AG04450 (cell line): ENCODE measurements at regions of chr1 and their contacts with region 1.

Region 1: GRCh38 chr1:221741711-221742554 is at the start of gene DUSP10:
- DNase-seq: peak; percentile 100
- H3K4me3 ChIP-seq: peak within 1 kb of the TSS; percentile 95
- H3K27ac ChIP-seq: peak within 1 kb of the TSS; percentile 97
- H3K27me3 ChIP-seq: no peaks in the 10 kb centered on the region
- CTCF ChIP-seq: no peak
- polyA plus RNA-seq, gene DUSP10: 34.2 and 35.9 TPM in 2 replicates

Region 2: DNA sequence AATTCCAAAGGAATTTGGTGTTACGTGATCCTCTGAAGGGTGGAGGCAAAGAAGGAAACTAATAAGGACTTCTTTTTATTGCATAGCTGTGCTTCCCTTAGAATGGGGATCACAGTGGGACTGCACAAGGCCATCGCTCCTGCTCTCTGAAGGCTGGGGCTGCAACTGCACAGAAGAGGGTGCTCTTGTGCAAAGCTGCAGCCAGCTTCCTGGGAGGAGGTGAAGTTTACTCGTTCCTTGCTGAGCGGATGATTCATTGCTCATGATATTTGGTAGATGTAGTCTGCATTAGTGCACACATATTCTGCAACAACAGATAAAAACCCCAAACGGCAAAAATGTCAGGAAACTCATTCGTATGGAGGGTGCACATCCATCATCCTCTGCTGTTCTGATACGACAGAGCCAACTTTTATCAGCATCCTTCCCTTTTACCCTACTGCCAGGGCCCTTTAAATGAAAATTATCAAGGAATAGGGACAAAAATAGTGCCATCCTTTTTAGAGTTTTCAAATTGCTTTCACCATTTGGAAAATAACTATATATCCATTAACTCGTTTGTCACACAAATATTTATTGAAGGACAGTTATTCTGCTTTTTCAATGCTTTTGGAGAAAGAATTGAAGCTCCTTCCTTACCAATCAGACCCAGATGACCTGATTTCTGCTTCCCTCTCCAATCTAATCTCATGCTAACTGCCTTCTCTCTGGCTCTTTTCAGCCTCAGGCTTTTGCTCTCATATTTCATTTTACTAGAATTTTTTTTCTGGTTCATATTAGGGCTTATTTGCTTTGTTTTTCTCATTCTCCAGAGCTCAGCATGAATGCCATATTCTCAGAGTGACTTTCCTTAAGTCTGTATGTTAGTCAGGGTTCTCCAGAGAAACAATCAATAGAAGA is 263.6 kb before region 1 on chr1:
- CTCF ChIA-PET with region 1: interaction called, 13 read pairs
- POLR2A ChIA-PET with region 1: interaction called, 13 read pairs
- DNase-seq: peak; percentile 66
- H3K4me3 ChIP-seq: no peak overlapping the region
- H3K27ac ChIP-seq: no peak overlapping the region
- H3K27me3 ChIP-seq: no peaks in the 10 kb centered on the region
- CTCF ChIP-seq: peak; percentile 95

Region 3: DNA sequence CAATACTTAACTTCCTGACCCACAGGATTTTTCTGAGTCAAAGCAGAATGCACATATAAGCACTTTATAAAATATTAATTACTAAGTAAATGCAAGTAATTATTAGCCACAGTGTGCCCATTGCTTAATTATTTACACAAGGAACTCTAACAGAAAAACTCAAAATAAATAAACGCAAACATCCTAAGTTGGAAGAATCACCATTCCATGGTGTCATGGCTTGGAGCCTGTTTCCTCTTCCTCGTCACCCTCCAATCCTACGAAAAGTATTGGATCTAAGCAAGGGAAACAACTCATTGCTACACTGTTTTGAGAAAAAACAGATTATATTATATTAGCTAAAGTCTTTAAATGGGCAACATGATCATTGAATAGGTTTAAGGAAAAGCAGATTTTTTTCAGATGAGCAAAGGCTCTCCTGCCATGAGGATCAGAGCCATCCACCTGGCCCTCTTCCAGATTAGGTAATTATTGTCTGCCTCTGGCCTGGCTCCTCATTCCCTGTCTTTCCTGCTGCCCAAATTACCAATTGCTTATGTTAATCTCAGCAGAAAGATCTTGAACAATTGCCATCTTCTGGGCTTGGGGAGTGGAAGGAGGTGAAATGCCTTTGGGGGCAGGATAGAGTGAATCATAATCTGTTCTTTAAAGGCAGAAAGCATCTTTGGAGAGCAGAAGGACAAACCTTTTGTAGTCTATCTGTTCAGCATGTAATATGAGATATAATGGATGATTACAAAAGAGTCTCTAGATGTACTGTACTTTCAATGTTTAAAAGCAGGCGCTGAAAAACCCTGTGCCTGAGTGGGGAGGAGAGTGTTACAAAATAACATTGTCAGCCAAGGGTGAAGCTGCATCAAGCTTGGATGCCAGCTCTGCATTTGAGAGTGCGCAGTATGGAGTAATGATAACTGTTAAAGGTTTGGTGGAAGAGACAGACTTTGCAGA is 121.2 kb before region 1 on chr1:
- CTCF ChIA-PET with region 1: no interaction called
- POLR2A ChIA-PET with region 1: no interaction called
- DNase-seq: no peak
- H3K4me3 ChIP-seq: no peak overlapping the region
- H3K27ac ChIP-seq: no peak overlapping the region
- H3K27me3 ChIP-seq: no peaks in the 10 kb centered on the region
- CTCF ChIP-seq: no peak

Region 4: DNA sequence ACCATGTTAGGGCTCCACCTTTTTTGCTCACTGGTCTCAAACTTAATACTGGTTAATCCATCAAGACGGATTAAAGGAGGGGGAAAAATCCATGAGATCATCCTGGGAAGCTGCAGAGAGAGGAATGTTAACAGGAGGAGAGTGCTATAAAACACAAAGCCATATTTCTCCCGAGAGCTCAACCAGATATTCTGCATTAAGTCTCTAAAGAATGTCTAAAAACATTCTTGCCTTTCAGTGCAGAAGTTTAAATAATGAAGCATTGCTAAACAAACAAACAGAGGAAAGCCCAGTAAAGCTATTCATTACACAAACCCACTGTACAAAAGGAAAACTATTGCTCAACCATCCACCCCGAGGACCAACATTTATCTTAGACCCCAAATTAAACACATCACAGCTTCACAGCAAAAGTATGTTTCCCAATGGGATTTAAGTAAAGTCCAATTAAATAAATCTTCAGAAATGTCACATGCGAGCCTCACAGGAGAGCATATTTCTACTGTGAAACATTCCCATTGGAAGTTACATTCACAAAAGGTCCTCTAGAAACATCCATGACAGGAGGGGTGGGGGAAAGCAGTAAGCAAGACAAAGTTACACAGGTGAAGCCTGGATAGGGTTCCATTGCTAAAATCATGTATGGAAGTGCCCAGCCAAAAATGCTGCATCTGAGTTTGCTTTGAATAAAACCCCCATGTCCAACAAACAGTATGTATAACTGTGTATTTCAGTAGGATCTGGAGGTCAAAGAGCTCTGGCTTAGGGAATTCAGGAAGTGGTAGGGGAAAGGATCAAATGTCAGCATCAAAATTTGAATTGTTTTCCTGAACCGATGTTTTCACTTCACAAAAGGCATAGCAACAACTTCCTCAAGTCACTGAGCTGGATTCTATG is 23.3 kb before region 1 on chr1:
- CTCF ChIA-PET with region 1: interaction called, 5 read pairs
- POLR2A ChIA-PET with region 1: interaction called, 30 read pairs
- DNase-seq: peak; percentile 86
- H3K4me3 ChIP-seq: no peak overlapping the region
- H3K27ac ChIP-seq: peak overlapping the region; percentile 82
- H3K27me3 ChIP-seq: no peaks in the 10 kb centered on the region
- CTCF ChIP-seq: no peak

Region 5: DNA sequence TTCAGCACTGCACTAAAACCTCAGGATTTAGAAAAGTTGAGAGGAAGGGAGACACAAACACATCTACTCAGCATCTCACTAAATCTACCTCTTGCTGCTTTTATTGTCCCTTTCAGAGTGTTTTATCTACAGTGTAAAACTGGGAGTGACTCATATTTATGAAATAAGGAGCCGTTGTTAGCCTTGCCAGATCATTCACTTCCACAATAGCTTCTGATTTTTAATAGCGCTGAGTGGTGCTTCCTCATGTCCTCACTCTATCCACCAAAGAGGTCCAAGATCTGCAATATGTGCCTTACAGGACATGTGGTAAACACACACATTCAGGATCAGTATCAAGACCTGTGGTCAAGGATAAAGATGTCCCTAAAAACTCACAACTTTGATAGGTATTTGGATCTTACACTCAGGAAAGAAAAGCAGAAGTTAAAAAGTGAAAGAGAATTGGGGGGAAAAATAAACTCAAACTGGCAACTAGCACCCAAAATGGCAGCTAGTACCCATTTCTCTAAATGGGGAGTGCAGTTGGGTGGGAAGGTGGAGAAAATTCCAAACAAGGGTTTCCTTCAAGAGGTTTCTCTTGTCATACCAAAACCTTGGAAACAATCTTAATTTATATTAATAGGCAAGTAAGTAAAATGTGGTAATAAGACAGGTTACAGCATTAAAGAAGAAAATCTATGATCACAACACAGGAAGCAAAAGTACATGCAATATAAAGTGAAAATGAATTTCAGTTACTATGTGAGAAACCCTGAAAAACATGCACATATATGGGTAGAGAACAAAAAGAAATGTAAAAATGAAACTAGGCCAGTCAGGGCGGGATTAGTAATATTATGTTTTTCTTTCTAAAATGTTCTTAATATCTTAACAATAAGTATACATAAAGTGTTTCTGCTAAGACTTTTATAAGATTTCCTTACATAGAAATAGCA is 15.9 kb before region 1 on chr1:
- CTCF ChIA-PET with region 1: no interaction called
- POLR2A ChIA-PET with region 1: interaction called, 19 read pairs
- DNase-seq: no peak
- H3K4me3 ChIP-seq: no peak overlapping the region
- H3K27ac ChIP-seq: no peak overlapping the region
- H3K27me3 ChIP-seq: no peaks in the 10 kb centered on the region
- CTCF ChIP-seq: no peak

Region 6: GRCh38 chr1:221801773-221802516 is 60.0 kb after region 1 on chr1:
- CTCF ChIA-PET with region 1: no interaction called
- POLR2A ChIA-PET with region 1: interaction called, 14 read pairs
- DNase-seq: peak; percentile 30
- H3K4me3 ChIP-seq: no peak overlapping the region
- H3K27ac ChIP-seq: peak overlapping the region; percentile 2
- H3K27me3 ChIP-seq: no peaks in the 10 kb centered on the region
- CTCF ChIP-seq: no peak